Right ventricle myocardium inferior (tissue), 1 donor: ENCODE measurements at regions of chr11 and their contacts with region 1.

Region 1: DNA sequence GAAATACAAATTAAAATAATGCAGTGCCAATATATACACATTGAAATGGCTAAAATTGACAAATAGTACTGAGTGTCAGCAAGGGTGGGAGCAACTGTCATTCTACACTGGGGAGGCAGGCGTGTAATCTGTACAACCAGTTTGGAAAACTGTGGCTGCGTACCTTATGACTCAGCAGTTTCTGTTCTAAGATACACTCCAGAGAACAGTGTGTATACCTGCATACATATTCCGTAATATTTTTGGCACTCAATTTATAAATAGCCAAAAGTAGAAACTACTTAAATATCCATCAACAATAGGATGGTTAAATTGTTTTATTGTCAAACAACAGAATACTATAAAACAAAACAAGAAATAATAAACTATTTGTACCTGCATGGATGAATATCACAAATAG is 57.6 kb downstream of the RNF169 start:
- DNase-seq: no peak
- ATAC-seq: peak; percentile 56

Region 2: GRCh38 chr11:74754507-74755255 is 51.6 kb before region 1 on chr11:
- intact Hi-C with region 1: loop called (anchors 10 kb)
- DNase-seq: no peak
- ATAC-seq: no peak

Region 3: DNA sequence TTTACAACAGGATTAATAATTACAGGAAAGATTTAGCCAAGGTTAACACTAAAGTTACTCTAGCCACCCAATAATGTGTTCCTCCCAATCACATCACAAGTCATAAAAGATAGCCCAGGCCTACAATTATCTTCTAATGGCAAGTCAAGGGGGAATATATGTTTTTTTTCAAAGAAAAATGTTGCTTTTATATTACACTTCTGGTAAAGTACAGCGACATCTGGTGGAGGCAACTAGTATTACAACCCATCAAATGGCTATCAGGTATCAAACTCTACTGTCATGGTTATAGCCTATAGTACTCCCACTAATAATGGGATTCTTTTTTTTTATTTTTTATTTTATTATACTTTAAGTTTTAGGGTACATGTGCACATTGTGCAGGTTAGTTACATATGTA is 70.9 kb after region 1 on chr11:
- intact Hi-C with region 1: no loop called
- DNase-seq: no peak
- ATAC-seq: no peak